WTC11 (cell line): ENCODE measurements at regions of chr16 and their contacts with region 1.

Region 1: GRCh38 chr16:2926650-2927646 is 15.2 kb downstream of the FLYWCH1 start:
- DNase-seq: peak; percentile 92
- ATAC-seq: peak; percentile 70
- H3K4me3 Mint-ChIP-seq: no peak overlapping the region; the same call in 1 of the 2 replicates
- H3K27ac Mint-ChIP-seq: peak overlapping the region; percentile 11; the same call in 1 of the 2 replicates
- H3K4me1 Mint-ChIP-seq: peaks cover 33% of the 10 kb centered on the region
- H3K27me3 Mint-ChIP-seq: peaks cover 9% of the 10 kb centered on the region
- CTCF ChIP-seq: peak; percentile 98

Region 2: GRCh38 chr16:2874912-2875362 is 52.0 kb before region 1 on chr16:
- CTCF ChIA-PET with region 1: interaction called, 22 read pairs
- POLR2A ChIA-PET with region 1: interaction called, 5 read pairs
- DNase-seq: peak; percentile 76
- ATAC-seq: peak; percentile 99
- H3K4me3 Mint-ChIP-seq: no peak overlapping the region
- H3K27ac Mint-ChIP-seq: no peak overlapping the region
- H3K4me1 Mint-ChIP-seq: peaks cover 11% of the 10 kb centered on the region
- H3K27me3 Mint-ChIP-seq: peaks cover 49% of the 10 kb centered on the region
- CTCF ChIP-seq: peak; percentile 75

Region 3: DNA sequence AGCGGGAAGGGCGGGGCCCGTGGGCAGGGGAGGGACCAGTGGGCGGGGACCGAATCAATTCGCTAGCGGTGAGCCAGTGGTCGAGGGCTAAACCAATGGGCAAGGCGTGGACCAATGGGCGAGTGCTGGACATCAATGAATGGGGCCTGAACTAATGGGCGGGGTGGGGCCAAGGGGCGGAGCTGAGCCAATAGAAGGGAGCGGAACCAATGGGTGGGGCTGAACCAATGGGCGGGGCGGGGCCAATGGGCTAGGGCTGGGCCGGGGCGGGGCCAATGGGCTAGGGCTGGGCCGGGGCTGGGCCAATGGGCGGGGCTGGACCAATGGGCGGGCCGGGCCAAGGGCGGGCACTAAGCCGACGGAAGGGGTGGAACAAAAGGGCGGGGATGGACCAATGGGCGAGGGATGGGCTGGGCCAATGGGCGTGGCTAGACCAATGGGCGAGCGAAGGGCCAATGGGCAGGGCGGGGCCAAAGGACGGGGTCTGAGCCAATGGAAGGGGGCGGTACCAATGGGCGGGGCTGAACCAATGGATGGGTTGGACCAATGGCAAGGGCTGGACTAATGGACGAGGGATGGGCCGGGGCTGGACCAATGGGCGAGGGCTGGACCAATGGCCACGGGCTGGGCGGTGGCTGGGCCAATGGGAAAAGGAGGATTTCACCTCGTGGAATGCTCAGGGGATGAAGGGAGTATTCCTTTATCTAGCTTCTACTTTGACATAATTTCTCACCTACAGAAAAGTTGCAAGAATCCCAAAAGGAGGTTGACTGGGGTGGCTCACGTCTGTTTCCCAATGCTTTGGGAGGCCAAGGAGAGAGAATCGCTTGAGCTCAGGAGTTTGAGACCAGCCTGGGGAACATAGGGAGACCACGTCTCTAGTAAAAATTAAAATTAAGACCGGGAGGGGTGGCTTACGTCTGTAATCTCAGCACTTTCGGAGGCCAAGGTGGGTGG is 21.2 kb before region 1 on chr16:
- CTCF ChIA-PET with region 1: interaction called, 17 read pairs
- POLR2A ChIA-PET with region 1: interaction called, 4 read pairs
- DNase-seq: peak; percentile 100
- ATAC-seq: peak; percentile 82
- H3K4me3 Mint-ChIP-seq: peak overlapping the region; percentile 97
- H3K27ac Mint-ChIP-seq: peak overlapping the region; percentile 91
- H3K4me1 Mint-ChIP-seq: peaks cover 17% of the 10 kb centered on the region
- H3K27me3 Mint-ChIP-seq: peaks cover 18% of the 10 kb centered on the region
- CTCF ChIP-seq: no peak

Region 4: DNA sequence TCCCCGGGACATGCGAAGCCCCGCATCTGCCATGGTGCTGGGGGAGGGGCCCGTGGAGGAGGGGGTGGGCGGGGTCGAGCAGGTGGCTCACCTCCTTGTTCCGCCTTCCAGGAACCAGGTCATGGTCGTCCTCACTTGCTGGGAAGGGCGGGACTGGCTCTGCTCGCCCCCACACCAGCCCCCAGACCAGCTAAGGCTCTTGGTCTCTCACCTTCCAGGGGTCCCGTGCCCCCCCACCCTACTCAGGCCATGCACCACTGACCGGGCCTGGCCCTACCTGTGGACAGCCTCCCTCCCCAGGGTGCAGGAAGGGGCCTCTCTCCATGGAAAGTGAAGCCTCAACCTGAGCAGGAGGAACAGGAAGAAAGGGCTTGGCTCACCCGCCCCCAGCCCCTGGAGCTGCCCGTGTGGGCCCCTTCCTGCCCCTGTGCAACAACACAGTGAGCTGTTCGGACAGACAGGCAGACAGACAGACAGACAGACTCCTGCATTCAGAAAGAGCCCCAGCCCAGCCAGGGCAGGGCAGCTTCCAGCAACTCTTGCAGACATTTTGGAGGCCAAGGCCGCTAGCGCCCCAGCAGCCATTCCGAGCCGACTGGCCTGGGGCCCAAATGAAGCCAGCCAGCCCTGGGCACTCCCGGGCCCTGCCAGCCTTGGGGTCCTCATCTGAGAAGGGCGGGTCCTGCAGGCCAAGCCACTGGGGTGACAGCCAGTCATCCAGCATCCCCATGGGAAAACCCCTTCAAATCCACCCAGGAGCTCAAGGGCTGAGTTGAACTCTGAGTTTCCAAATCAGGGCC is 29.0 kb after region 1 on chr16:
- CTCF ChIA-PET with region 1: interaction called, 10 read pairs
- POLR2A ChIA-PET with region 1: no interaction called
- DNase-seq: peak; percentile 40
- ATAC-seq: peak; percentile 64
- H3K4me3 Mint-ChIP-seq: no peak overlapping the region
- H3K27ac Mint-ChIP-seq: 0 out of 2 replicates have a peak overlapping the region, but pooled peaks have one; percentile 41
- H3K4me1 Mint-ChIP-seq: peaks cover 26% of the 10 kb centered on the region
- H3K27me3 Mint-ChIP-seq: no peaks in the 10 kb centered on the region; the same call in 1 of the 2 replicates
- CTCF ChIP-seq: no peak

Region 5: GRCh38 chr16:2980227-2981086 is 53.5 kb after region 1 on chr16 and contains the start of gene PKMYT1:
- CTCF ChIA-PET with region 1: interaction called, 11 read pairs
- POLR2A ChIA-PET with region 1: no interaction called
- DNase-seq: peak; percentile 89
- ATAC-seq: peak; percentile 72
- H3K4me3 Mint-ChIP-seq: peak within 1 kb of the TSS; percentile 79
- H3K27ac Mint-ChIP-seq: peak within 1 kb of the TSS; percentile 91
- H3K4me1 Mint-ChIP-seq: peaks cover 24% of the 10 kb centered on the region
- H3K27me3 Mint-ChIP-seq: peaks cover 6% of the 10 kb centered on the region; the same call in 1 of the 2 replicates
- CTCF ChIP-seq: no peak
- total RNA-seq, gene PKMYT1: 102 to 120 TPM (median 113 TPM) in 3 replicates

Region 6: GRCh38 chr16:3134564-3135417 is 207.8 kb after region 1 on chr16 and contains the start of gene ZNF213:
- CTCF ChIA-PET with region 1: no interaction called
- POLR2A ChIA-PET with region 1: no interaction called
- DNase-seq: peak; percentile 94
- ATAC-seq: peak; percentile 94
- H3K4me3 Mint-ChIP-seq: peak within 1 kb of the TSS; percentile 98
- H3K27ac Mint-ChIP-seq: peak within 1 kb of the TSS; percentile 99
- H3K4me1 Mint-ChIP-seq: peaks cover 17% of the 10 kb centered on the region
- H3K27me3 Mint-ChIP-seq: no peaks in the 10 kb centered on the region
- CTCF ChIP-seq: no peak
- total RNA-seq, gene ZNF213: 8.9 to 11.6 TPM (median 10.3 TPM) in 3 replicates